ENCODE measurements at regions of chr15 and their contacts with region 1.

Region 1: GRCh38 chr15:48112242-48112641 is 8.5 kb upstream of the SLC24A5 start:
- DNase-seq: no peak
- ATAC-seq: peak in 1 of 8 donors; percentile 65
- H3K4me3 ChIP-seq: no peak overlapping the region
- H3K27ac ChIP-seq: no peak overlapping the region
- H3K4me1 ChIP-seq: no peaks in the 10 kb centered on the region
- H3K27me3 ChIP-seq: peaks cover 0 to 18% (median 4%) of the 10 kb centered on the region in 7 donors
- CTCF ChIP-seq: peak in 7 of 9 donors; percentile 34 to 57 (median 53)

Region 2: GRCh38 chr15:48202068-48202467 is 89.8 kb after region 1 on chr15:
- intact Hi-C with region 1: no loop called
- DNase-seq: no peak
- ATAC-seq: no peak
- H3K4me3 ChIP-seq: no peak overlapping the region
- H3K27ac ChIP-seq: no peak overlapping the region
- H3K4me1 ChIP-seq: no peaks in the 10 kb centered on the region
- H3K27me3 ChIP-seq: peaks cover 0 to 13% (median 0%) of the 10 kb centered on the region in 7 donors
- CTCF ChIP-seq: no peak

Region 3: DNA sequence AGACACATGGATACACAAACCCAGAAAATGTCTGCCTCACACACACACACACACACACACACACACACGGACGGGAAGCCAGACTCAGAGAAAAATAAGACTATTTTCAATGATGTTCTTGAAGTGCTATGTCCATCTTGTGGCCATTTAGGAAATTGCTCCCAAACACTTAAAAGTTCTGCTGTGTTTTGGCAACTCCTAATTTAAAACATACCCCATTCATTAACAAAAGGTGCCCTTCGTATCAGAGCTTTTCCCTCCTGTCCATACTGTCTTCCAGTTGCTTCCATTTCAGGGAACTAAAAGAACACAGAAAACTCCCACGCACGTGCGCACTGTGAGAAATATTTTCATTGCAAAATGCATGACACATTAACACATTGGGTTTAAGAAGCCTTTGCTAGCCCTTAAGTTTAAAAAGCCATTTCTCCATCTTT is 138.4 kb after region 1 on chr15:
- intact Hi-C with region 1: loop called in 3 of 10 experiments (anchors 5 to 10 kb)
- DNase-seq: peak in 1 of 2 donors; percentile 36
- ATAC-seq: no peak
- H3K4me3 ChIP-seq: no peak overlapping the region
- H3K27ac ChIP-seq: no peak overlapping the region
- H3K4me1 ChIP-seq: no peaks in the 10 kb centered on the region
- H3K27me3 ChIP-seq: peaks cover 0 to 25% (median 4%) of the 10 kb centered on the region in 7 donors
- CTCF ChIP-seq: peak; percentile 8 to 62 (median 50)

Region 4: DNA sequence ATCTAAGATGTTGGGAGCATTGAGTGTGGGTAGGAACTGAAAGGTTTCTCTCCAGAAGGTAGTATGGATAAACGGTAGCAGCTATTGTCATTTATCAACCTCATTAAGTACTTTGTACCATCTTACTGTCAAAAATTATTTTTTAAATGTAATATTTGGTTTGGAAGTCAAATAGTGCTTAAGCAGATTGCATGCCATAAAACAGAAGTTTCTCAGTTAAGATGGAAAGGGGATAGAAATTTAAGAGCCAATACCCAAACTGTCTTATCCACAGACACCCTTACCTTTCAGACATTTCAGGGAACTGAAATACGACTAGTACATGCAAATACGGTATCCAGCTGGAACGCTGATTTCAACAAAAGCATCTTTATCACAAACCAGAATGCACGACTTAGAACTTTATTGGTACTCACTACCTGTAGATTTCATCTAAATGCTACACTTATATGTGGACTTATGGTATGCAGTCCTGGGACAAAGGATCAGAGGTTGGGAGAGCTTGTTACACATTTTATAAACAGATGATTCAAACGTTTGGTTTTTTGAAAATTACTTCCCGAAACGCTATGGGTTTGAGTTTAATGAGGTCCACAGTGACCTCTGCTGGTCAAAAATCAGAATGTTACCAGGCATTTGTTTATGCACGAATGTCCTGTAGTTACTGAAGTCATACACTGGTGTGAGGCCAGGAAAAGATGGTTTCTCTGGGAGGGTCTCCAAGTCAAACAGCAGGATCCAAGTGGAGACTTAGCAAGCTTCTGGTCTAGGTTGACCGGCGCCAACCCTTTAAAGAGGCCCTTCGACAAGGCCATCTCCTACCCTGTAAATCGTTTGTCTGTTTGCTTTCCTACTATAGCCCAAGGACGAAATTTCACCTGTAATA is 173.3 kb after region 1 on chr15:
- intact Hi-C with region 1: loop called in 4 of 10 experiments (anchors 10 kb)
- DNase-seq: peak in 1 of 2 donors; percentile 61
- ATAC-seq: peak in 7 of 8 donors; percentile 70 to 82 (median 78)
- H3K4me3 ChIP-seq: peak overlapping the region in 6 of 10 donors; percentile 9 to 35 (median 28)
- H3K27ac ChIP-seq: no peak overlapping the region
- H3K4me1 ChIP-seq: peaks cover 0 to 30% (median 5%) of the 10 kb centered on the region in 9 donors
- H3K27me3 ChIP-seq: no peaks in the 10 kb centered on the region
- CTCF ChIP-seq: peak; percentile 56 to 82 (median 72)